ENCODE measurements at regions of chr3 and their contacts with region 1.

Region 1: GRCh38 chr3:120450600-120451271 is at the start of gene FSTL1:
- DNase-seq: peak; percentile 70
- ATAC-seq: peak; percentile 76
- H3K4me3 ChIP-seq: peak within 1 kb of the TSS; percentile 94
- H3K27ac ChIP-seq: peak within 1 kb of the TSS; percentile 98
- H3K4me1 ChIP-seq: peaks cover 17% of the 10 kb centered on the region
- H3K27me3 ChIP-seq: no peaks in the 10 kb centered on the region
- CTCF ChIP-seq: no peak
- POLR2A ChIP-seq: peak; percentile 93
- RAD21 ChIP-seq: no peak
- total RNA-seq, gene FSTL1: 1,097 and 1,642 TPM in 2 replicates

Region 2: DNA sequence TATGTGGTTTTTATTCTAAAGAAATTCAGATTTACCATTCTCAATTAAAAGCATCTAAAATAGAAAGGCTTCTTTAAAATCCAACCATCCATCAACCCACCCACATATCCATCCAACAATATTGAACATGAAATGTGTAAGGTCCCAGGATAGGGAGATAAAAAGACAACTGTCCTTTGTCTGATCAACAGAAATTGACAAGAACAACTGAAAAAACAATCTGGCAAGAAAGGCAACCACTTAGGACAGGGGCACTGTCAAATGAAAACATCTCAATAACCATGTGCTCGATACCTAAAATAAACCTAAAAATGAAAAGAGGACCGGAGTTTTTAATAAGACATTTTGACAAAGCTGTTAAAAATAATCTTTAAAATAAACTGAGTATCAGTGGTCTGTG is 601.6 kb before region 1 on chr3:
- CTCF ChIA-PET with region 1: no interaction called
- POLR2A ChIA-PET with region 1: no interaction called
- dilution Hi-C with region 1: no loop called
- in situ Hi-C with region 1: no loop called
- intact Hi-C with region 1: no loop called
- DNase-seq: no peak
- ATAC-seq: no peak
- H3K4me3 ChIP-seq: no peak overlapping the region
- H3K27ac ChIP-seq: no peak overlapping the region
- H3K4me1 ChIP-seq: no peaks in the 10 kb centered on the region
- H3K27me3 ChIP-seq: no peaks in the 10 kb centered on the region
- CTCF ChIP-seq: no peak
- POLR2A ChIP-seq: no peak
- RAD21 ChIP-seq: no peak

Region 3: GRCh38 chr3:120404876-120405275 is 45.9 kb before region 1 on chr3:
- CTCF ChIA-PET with region 1: no interaction called
- POLR2A ChIA-PET with region 1: no interaction called
- dilution Hi-C with region 1: no loop called
- in situ Hi-C with region 1: no loop called
- intact Hi-C with region 1: loop called (anchors 1 kb)
- DNase-seq: peak; percentile 25
- ATAC-seq: peak; percentile 46; the same call in 1 of the 2 replicates
- H3K4me3 ChIP-seq: no peak overlapping the region
- H3K27ac ChIP-seq: no peak overlapping the region
- H3K4me1 ChIP-seq: peaks cover 2% of the 10 kb centered on the region; the same call in 1 of the 2 replicates
- H3K27me3 ChIP-seq: no peaks in the 10 kb centered on the region
- CTCF ChIP-seq: no peak
- POLR2A ChIP-seq: no peak
- RAD21 ChIP-seq: no peak

Region 4: GRCh38 chr3:120417272-120417911 is 33.3 kb before region 1 on chr3:
- CTCF ChIA-PET with region 1: interaction called, 4 read pairs
- POLR2A ChIA-PET with region 1: no interaction called
- dilution Hi-C with region 1: no loop called
- in situ Hi-C with region 1: no loop called
- intact Hi-C with region 1: loop called (anchors 2 kb)
- DNase-seq: peak; percentile 99
- ATAC-seq: peak; percentile 90
- H3K4me3 ChIP-seq: no peak overlapping the region
- H3K27ac ChIP-seq: peak overlapping the region; percentile 79; the same call in 1 of the 2 replicates
- H3K4me1 ChIP-seq: peaks cover 29% of the 10 kb centered on the region
- H3K27me3 ChIP-seq: no peaks in the 10 kb centered on the region
- CTCF ChIP-seq: peak; percentile 87
- POLR2A ChIP-seq: no peak
- RAD21 ChIP-seq: peak; percentile 66

Region 5: GRCh38 chr3:120470870-120471269 is 20.1 kb after region 1 on chr3:
- CTCF ChIA-PET with region 1: no interaction called
- POLR2A ChIA-PET with region 1: no interaction called
- dilution Hi-C with region 1: no loop called
- in situ Hi-C with region 1: no loop called
- intact Hi-C with region 1: loop called (anchors 2 kb)
- DNase-seq: no peak
- ATAC-seq: peak; percentile 13; the same call in 1 of the 2 replicates
- H3K4me3 ChIP-seq: no peak overlapping the region
- H3K27ac ChIP-seq: peak overlapping the region; percentile 80
- H3K4me1 ChIP-seq: peaks cover 26% of the 10 kb centered on the region
- H3K27me3 ChIP-seq: no peaks in the 10 kb centered on the region
- CTCF ChIP-seq: no peak
- POLR2A ChIP-seq: no peak
- RAD21 ChIP-seq: no peak

Region 6: DNA sequence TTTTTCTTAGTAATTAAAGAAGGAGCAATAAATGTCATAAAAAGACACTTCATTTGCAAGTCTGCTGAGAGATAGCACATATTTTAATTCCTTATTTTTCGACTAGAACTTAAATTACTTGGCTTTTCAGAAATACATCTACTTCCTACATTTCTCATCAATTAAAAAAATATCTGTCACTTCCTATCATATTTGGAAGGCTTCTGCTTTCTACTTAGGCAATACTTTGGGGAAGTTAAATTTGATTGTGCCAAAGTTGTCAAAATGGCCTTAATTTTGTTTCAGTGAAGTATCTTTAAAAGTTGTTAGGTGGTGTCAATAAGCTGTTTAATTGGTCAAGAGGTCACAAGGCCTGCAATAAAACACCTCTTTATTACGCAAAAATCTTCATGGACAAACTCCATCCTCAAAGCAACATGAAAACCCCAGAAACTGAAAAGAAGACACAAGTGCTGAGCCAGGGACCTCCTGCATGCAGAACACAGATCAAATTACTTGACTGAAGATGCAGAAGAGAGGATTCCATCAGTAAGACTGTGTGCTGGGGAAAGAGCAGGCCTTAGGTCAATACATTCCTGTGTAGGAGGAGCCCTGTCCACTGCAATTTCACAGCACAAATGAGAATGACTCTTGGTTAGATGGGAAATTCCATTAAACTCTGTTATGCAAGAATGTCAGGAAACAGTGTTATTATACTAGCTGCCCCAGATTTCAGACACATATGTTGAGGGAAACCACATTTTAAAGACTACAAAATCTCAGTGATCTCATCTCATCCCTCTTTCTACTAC is 48.0 kb after region 1 on chr3:
- CTCF ChIA-PET with region 1: no interaction called
- POLR2A ChIA-PET with region 1: interaction called, 4 read pairs
- dilution Hi-C with region 1: no loop called
- in situ Hi-C with region 1: no loop called
- intact Hi-C with region 1: loop called (anchors 1 kb)
- DNase-seq: peak; percentile 99
- ATAC-seq: peak; percentile 95
- H3K4me3 ChIP-seq: no peak overlapping the region
- H3K27ac ChIP-seq: peak overlapping the region; percentile 17; the same call in 1 of the 2 replicates
- H3K4me1 ChIP-seq: peaks cover 3% of the 10 kb centered on the region
- H3K27me3 ChIP-seq: no peaks in the 10 kb centered on the region
- CTCF ChIP-seq: no peak
- POLR2A ChIP-seq: no peak
- RAD21 ChIP-seq: peak; percentile 17; the same call in 1 of the 2 replicates

Region 7: DNA sequence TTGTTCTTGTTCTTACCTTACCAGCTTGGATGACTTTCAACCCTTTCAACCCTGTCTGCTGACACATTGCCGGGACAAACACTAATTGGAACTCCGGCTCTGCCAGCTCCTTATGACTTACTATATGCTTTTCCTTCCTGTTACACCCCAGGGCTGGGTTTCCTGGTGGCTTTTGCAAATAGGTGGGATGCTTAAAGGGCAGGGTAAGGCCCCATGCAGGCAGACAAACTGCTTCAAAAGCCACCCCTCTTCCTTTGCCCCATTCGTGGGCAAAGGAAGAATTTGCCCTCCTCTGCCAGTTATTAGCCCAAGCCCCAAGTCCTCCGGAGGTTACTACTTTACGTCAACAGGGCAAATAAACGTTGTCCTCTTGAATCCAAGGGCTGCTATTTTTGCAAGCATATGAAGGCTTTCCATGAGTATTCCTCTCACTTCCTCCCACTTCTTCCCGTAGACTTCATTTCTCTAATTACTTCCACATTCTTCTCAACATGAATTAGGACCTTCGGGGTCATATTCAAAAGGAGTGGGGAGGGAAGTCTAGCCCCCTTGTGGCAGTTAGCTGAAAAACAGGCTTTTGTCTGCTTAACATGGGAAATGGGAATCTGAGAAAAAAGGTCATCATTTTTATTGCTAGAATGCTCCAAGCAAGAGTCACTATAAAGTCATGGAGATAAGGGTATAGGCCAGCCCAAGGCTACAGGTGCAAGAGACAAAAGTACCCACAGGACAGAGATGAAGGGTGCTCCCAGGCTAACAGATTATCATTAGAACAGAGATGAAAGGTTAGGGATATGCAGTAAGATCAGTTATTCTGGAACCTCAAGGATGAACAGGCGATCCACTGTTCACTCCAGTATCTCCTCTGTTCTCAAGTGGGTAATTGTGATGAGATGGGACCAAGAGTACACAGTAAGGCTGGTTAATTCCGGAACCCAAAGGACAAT is 56.4 kb after region 1 on chr3:
- CTCF ChIA-PET with region 1: interaction called, 3 read pairs
- POLR2A ChIA-PET with region 1: no interaction called
- dilution Hi-C with region 1: no loop called
- in situ Hi-C with region 1: no loop called
- intact Hi-C with region 1: loop called (anchors 1 kb)
- DNase-seq: peak; percentile 60
- ATAC-seq: peak; percentile 82
- H3K4me3 ChIP-seq: no peak overlapping the region
- H3K27ac ChIP-seq: no peak overlapping the region
- H3K4me1 ChIP-seq: peaks cover 4% of the 10 kb centered on the region; the same call in 1 of the 2 replicates
- H3K27me3 ChIP-seq: no peaks in the 10 kb centered on the region
- CTCF ChIP-seq: peak; percentile 64
- POLR2A ChIP-seq: no peak
- RAD21 ChIP-seq: peak; percentile 61

Region 8: GRCh38 chr3:120622870-120623731 is 172.4 kb after region 1 on chr3:
- CTCF ChIA-PET with region 1: no interaction called
- POLR2A ChIA-PET with region 1: no interaction called
- dilution Hi-C with region 1: no loop called
- in situ Hi-C with region 1: no loop called
- intact Hi-C with region 1: no loop called
- DNase-seq: peak; percentile 82
- ATAC-seq: peak; percentile 29; the same call in 1 of the 2 replicates
- H3K4me3 ChIP-seq: no peak overlapping the region
- H3K27ac ChIP-seq: no peak overlapping the region
- H3K4me1 ChIP-seq: no peaks in the 10 kb centered on the region
- H3K27me3 ChIP-seq: no peaks in the 10 kb centered on the region
- CTCF ChIP-seq: 0 out of 2 replicates have a peak, but pooled peaks have one; percentile 14
- POLR2A ChIP-seq: no peak
- RAD21 ChIP-seq: 0 out of 2 replicates have a peak, but pooled peaks have one; percentile 12

Region 9: GRCh38 chr3:121482660-121483059 is 1031.9 kb after region 1 on chr3:
- CTCF ChIA-PET with region 1: no interaction called
- POLR2A ChIA-PET with region 1: no interaction called
- dilution Hi-C with region 1: no loop called
- in situ Hi-C with region 1: loop called (anchors 25 kb)
- intact Hi-C with region 1: no loop called
- DNase-seq: peak; percentile 91
- ATAC-seq: peak; percentile 72
- H3K4me3 ChIP-seq: no peak overlapping the region
- H3K27ac ChIP-seq: no peak overlapping the region
- H3K4me1 ChIP-seq: peaks cover 10% of the 10 kb centered on the region
- H3K27me3 ChIP-seq: no peaks in the 10 kb centered on the region
- CTCF ChIP-seq: no peak
- POLR2A ChIP-seq: no peak
- RAD21 ChIP-seq: no peak

Measured in IMR-90 (cell line).